ENCODE measurements at regions of chr4 and their contacts with region 1.

Region 1: GRCh38 chr4:68732653-68733466 is 62.4 kb upstream of the UGT2B15 start:
- DNase-seq: peak; percentile 90 to 94
- H3K4me3 ChIP-seq: no peak overlapping the region
- H3K4me3 Mint-ChIP-seq: peak overlapping the region; percentile 63
- H3K27ac Mint-ChIP-seq: peak overlapping the region; percentile 90
- H3K4me1 ChIP-seq: peaks cover 46% of the 10 kb centered on the region
- H3K4me1 Mint-ChIP-seq: peaks cover 40% of the 10 kb centered on the region
- H3K27me3 ChIP-seq: no peaks in the 10 kb centered on the region
- H3K27me3 Mint-ChIP-seq: no peaks in the 10 kb centered on the region
- CTCF ChIP-seq: no peak

Region 2: DNA sequence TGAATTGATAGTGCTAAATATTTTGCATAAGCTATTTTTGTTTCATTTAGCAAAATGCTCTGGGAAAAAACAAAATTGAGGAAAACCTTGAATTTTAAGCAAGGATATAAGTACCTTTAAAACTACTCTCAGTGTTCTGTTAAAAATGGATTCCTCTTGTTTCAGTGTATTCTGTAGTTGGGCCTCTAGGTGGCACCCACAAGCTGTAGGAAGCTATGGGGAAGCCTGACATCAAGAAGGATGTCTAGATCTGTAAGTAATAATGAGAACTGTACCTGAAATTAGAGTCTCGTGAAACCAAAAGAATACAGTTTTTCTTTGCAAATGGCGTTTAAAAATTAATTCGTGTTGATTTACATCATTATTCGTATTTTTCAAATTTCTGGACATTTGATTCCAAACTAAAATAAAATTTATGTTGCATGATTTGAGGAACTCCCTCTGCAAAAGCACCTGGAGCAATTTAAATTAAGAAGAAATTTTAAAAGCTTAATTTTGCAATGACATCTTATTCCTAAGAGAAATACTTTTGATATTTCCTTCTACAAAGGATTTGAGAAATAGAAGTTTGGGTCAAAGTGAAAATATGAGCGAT is 234.3 kb before region 1 on chr4:
- CTCF ChIA-PET with region 1: no interaction called
- POLR2A ChIA-PET with region 1: no interaction called
- intact Hi-C with region 1: loop called (anchors 1 kb)
- DNase-seq: peak; percentile 68 to 78
- H3K4me3 ChIP-seq: no peak overlapping the region
- H3K4me3 Mint-ChIP-seq: no peak overlapping the region
- H3K27ac Mint-ChIP-seq: no peak overlapping the region
- H3K4me1 ChIP-seq: peaks cover 14% of the 10 kb centered on the region
- H3K4me1 Mint-ChIP-seq: no peaks in the 10 kb centered on the region
- H3K27me3 ChIP-seq: no peaks in the 10 kb centered on the region
- H3K27me3 Mint-ChIP-seq: no peaks in the 10 kb centered on the region
- CTCF ChIP-seq: peak; percentile 77 to 85

Region 3: GRCh38 chr4:68773699-68774098 is 40.8 kb after region 1 on chr4:
- CTCF ChIA-PET with region 1: no interaction called
- POLR2A ChIA-PET with region 1: no interaction called
- intact Hi-C with region 1: no loop called
- DNase-seq: no peak
- H3K4me3 ChIP-seq: no peak overlapping the region
- H3K4me3 Mint-ChIP-seq: no peak overlapping the region
- H3K27ac Mint-ChIP-seq: no peak overlapping the region
- H3K4me1 ChIP-seq: 0 out of 2 replicates have a peak, but pooled peaks cover 5% of the 10 kb centered on the region
- H3K4me1 Mint-ChIP-seq: peaks cover 15% of the 10 kb centered on the region
- H3K27me3 ChIP-seq: no peaks in the 10 kb centered on the region
- H3K27me3 Mint-ChIP-seq: no peaks in the 10 kb centered on the region
- CTCF ChIP-seq: no peak

Region 4: GRCh38 chr4:68820770-68821169 is 87.9 kb after region 1 on chr4:
- CTCF ChIA-PET with region 1: no interaction called
- POLR2A ChIA-PET with region 1: no interaction called
- intact Hi-C with region 1: loop called (anchors 5 kb)
- DNase-seq: no peak
- H3K4me3 ChIP-seq: no peak overlapping the region
- H3K4me3 Mint-ChIP-seq: no peak overlapping the region
- H3K27ac Mint-ChIP-seq: no peak overlapping the region
- H3K4me1 ChIP-seq: no peaks in the 10 kb centered on the region
- H3K4me1 Mint-ChIP-seq: peaks cover 11% of the 10 kb centered on the region
- H3K27me3 ChIP-seq: no peaks in the 10 kb centered on the region
- H3K27me3 Mint-ChIP-seq: no peaks in the 10 kb centered on the region
- CTCF ChIP-seq: no peak

Region 5: GRCh38 chr4:68904786-68905185 is 171.9 kb after region 1 on chr4:
- CTCF ChIA-PET with region 1: interaction called, 5 read pairs
- POLR2A ChIA-PET with region 1: interaction called, 6 read pairs
- intact Hi-C with region 1: loop called (anchors 1 kb)
- DNase-seq: peak; percentile 62 to 63
- H3K4me3 ChIP-seq: no peak overlapping the region
- H3K4me3 Mint-ChIP-seq: peak overlapping the region; percentile 83
- H3K27ac Mint-ChIP-seq: peak overlapping the region; percentile 94
- H3K4me1 ChIP-seq: peaks cover 47% of the 10 kb centered on the region
- H3K4me1 Mint-ChIP-seq: peaks cover 17% of the 10 kb centered on the region
- H3K27me3 ChIP-seq: no peaks in the 10 kb centered on the region
- H3K27me3 Mint-ChIP-seq: no peaks in the 10 kb centered on the region
- CTCF ChIP-seq: peak; percentile 44 to 54

Region 6: GRCh38 chr4:69095301-69095731 is 362.5 kb after region 1 on chr4:
- CTCF ChIA-PET with region 1: no interaction called
- POLR2A ChIA-PET with region 1: no interaction called
- intact Hi-C with region 1: loop called (anchors 1 kb)
- DNase-seq: no peak
- H3K4me3 ChIP-seq: no peak overlapping the region
- H3K4me3 Mint-ChIP-seq: no peak overlapping the region
- H3K27ac Mint-ChIP-seq: peak overlapping the region; percentile 81
- H3K4me1 ChIP-seq: peaks cover 31% of the 10 kb centered on the region
- H3K4me1 Mint-ChIP-seq: peaks cover 28% of the 10 kb centered on the region
- H3K27me3 ChIP-seq: no peaks in the 10 kb centered on the region
- H3K27me3 Mint-ChIP-seq: no peaks in the 10 kb centered on the region
- CTCF ChIP-seq: no peak